Right cardiac atrium (tissue), 5 donors: ENCODE measurements at regions of chrX and their contacts with region 1.

Region 1: DNA sequence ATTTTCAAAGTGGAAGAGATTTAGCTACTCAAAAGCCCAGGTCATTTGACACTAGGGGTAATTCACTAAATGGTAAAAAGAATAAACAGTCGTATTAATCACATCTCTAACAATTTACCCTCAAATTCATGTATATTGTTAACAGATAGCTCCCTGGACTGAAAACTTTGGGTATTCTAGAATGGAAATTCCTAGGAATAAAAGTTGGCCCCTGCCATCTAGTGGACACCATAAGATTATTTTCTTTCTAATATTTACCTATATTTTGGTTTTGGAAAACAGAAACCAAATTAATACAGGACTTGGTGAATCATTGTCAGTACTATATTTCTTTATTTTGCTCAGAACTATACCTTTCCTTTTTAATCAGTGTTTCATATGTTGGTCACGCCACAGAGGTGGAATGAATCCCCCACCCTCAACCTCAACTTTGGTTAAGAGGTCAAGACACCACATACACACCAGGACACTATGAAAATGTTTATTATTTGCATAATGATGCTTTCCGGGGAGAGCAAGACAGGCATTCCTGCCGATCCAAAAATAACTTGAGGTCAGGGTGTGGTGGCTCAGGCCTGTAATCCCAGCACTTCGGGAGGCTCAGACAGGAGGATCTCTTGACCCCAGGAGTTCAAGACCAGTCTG is 96.2 kb upstream of the APOOL start:
- DNase-seq: no peak
- ATAC-seq: no peak
- H3K4me3 ChIP-seq: no peak overlapping the region
- H3K27ac ChIP-seq: no peak overlapping the region
- H3K4me1 ChIP-seq: no peaks in the 10 kb centered on the region
- H3K27me3 ChIP-seq: no peaks in the 10 kb centered on the region

Region 2: GRCh38 chrX:84729809-84730208 is 177.6 kb before region 1 on chrX:
- intact Hi-C with region 1: loop called in 3 of 4 experiments (anchors 5 to 10 kb)
- DNase-seq: peak; percentile 9 to 40 (median 25)
- ATAC-seq: peak; percentile 76 to 87
- H3K4me3 ChIP-seq: no peak overlapping the region
- H3K27ac ChIP-seq: no peak overlapping the region
- H3K4me1 ChIP-seq: no peaks in the 10 kb centered on the region
- H3K27me3 ChIP-seq: no peaks in the 10 kb centered on the region

Region 3: GRCh38 chrX:85024044-85024443 is 116.6 kb after region 1 on chrX:
- intact Hi-C with region 1: no loop called
- DNase-seq: no peak
- ATAC-seq: no peak
- H3K4me3 ChIP-seq: no peak overlapping the region
- H3K27ac ChIP-seq: no peak overlapping the region
- H3K4me1 ChIP-seq: no peaks in the 10 kb centered on the region
- H3K27me3 ChIP-seq: no peaks in the 10 kb centered on the region

Region 4: GRCh38 chrX:85037114-85037513 is 129.7 kb after region 1 on chrX:
- intact Hi-C with region 1: no loop called
- DNase-seq: no peak
- ATAC-seq: no peak
- H3K4me3 ChIP-seq: no peak overlapping the region
- H3K27ac ChIP-seq: no peak overlapping the region
- H3K4me1 ChIP-seq: peaks cover 3% of the 10 kb centered on the region
- H3K27me3 ChIP-seq: no peaks in the 10 kb centered on the region